CD4-positive, alpha-beta T cell (primary cell): ENCODE measurements at regions of chr17 and their contacts with region 1.

Region 1: DNA sequence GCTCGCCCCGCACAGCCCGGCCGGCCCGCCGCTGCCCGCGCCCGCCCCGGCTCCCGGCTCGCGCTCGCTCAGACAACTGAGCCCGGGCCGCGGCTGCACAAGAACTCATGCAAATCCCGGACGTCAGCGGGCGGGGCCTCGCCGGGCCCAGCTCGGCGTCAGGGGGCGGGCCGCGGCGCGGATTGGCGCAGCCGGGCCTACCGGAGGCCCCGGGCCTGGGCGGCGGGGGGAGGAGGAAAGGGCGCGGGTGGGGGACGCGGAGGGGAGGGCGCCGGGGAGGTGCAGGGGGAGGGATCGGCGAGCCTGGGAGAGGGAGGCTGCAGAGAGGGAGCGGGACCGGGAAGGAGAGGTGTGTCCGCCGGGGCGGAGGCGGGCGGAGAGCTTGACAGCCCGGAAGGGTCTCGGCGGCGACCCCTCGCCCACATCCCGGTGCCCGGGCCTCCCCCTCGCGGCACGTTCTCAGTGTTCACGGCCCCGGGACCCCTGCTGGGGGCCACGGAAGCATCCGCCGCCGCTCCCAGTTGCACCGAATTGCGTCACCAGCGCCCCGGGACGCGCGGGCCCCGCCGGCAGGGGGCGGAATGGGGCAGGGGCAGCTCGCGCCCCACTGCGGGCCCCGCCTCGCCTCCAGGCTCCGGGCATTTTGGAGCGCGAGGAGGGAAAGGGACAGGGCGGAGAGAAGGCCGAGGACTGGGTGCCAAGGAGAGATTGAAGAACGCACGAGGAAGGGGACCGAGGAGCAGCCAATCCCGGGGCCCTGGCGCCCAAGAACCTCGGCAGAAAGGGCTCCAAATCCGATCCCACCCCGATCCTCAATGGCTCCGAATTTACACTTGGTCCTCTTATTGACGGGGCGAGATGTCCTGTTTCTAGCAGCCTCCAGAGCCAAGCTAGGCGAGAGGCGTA is at the start of gene CBX4:
- DNase-seq: peak; percentile 84 to 96 (median 92)
- ATAC-seq: peak; percentile 73
- H3K4me3 ChIP-seq: peak within 1 kb of the TSS; percentile 98
- H3K4me3 Mint-ChIP-seq: peak within 1 kb of the TSS; percentile 98
- H3K27ac ChIP-seq: peak within 1 kb of the TSS; percentile 58 to 75
- H3K27ac Mint-ChIP-seq: peak within 1 kb of the TSS; percentile 99
- H3K4me1 ChIP-seq: peaks cover 86% of the 10 kb centered on the region
- H3K4me1 Mint-ChIP-seq: peaks cover 48% of the 10 kb centered on the region
- H3K27me3 ChIP-seq: peaks cover 37 to 47% of the 10 kb centered on the region in 2 experiments
- H3K27me3 Mint-ChIP-seq: peaks cover 38% of the 10 kb centered on the region
- CTCF ChIP-seq: peak; percentile 67
- total RNA-seq, gene CBX4: 196 to 202 TPM

Region 2: DNA sequence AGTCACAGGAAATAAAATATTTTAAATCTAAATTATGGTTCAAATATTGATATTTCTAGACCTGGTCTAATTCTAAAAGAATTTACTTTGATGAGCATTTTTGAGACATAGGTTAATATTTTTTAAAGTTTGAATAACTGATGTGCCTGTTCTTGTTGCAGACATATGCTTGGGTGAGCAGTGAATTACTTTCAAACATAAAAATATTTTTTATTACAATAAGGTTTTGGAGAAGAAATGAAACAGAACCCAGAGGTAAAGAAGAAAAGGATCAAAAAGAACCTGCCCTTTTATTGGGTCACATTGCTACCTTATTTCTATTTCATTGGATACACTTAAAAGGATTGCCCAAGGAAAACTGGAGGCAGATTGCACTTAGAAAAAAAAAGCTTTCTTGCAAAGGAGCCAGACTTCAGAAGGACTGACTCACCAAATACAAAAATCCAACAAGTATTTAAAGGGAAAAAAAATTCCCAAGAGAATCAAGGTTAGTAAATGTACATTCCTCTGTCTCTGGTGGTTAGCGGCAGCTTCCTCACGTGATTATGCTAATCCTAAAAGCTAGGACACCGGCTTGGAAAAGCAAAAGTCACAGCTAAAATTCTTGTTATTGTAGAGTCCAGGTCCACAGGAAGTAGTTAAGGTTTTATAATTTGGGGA is 90.3 kb before region 1 on chr17:
- CTCF ChIA-PET with region 1: interaction called, 9 read pairs
- POLR2A ChIA-PET with region 1: interaction called, 14 read pairs
- intact Hi-C with region 1: loop called (anchors 1 kb)
- DNase-seq: no peak
- ATAC-seq: no peak
- H3K4me3 ChIP-seq: no peak overlapping the region
- H3K4me3 Mint-ChIP-seq: no peak overlapping the region
- H3K27ac ChIP-seq: no peak overlapping the region
- H3K27ac Mint-ChIP-seq: no peak overlapping the region
- H3K4me1 ChIP-seq: peaks cover 28% of the 10 kb centered on the region
- H3K4me1 Mint-ChIP-seq: peaks cover 19% of the 10 kb centered on the region
- H3K27me3 ChIP-seq: peaks cover 44 to 54% of the 10 kb centered on the region in 2 experiments
- H3K27me3 Mint-ChIP-seq: peaks cover 69% of the 10 kb centered on the region
- CTCF ChIP-seq: no peak

Region 3: GRCh38 chr17:79796763-79797491 is 42.7 kb before region 1 on chr17 and contains the start of gene CBX8:
- CTCF ChIA-PET with region 1: interaction called, 6 read pairs
- POLR2A ChIA-PET with region 1: interaction called, 127 read pairs
- intact Hi-C with region 1: loop called (anchors 1 to 5 kb)
- DNase-seq: peak; percentile 97 to 100 (median 99)
- ATAC-seq: peak; percentile 80
- H3K4me3 ChIP-seq: peak within 1 kb of the TSS; percentile 69
- H3K4me3 Mint-ChIP-seq: peak within 1 kb of the TSS; percentile 93
- H3K27ac ChIP-seq: peak within 1 kb of the TSS in 1 of 2 donors; percentile 7
- H3K27ac Mint-ChIP-seq: peak within 1 kb of the TSS; percentile 80
- H3K4me1 ChIP-seq: peaks cover 62% of the 10 kb centered on the region
- H3K4me1 Mint-ChIP-seq: peaks cover 49% of the 10 kb centered on the region
- H3K27me3 ChIP-seq: peaks cover 50 to 58% of the 10 kb centered on the region in 2 experiments
- H3K27me3 Mint-ChIP-seq: peaks cover 50% of the 10 kb centered on the region
- CTCF ChIP-seq: no peak
- total RNA-seq, gene CBX8: 5.3 to 6.5 TPM

Region 4: GRCh38 chr17:79818026-79818758 is 21.4 kb before region 1 on chr17:
- CTCF ChIA-PET with region 1: interaction called, 15 read pairs
- POLR2A ChIA-PET with region 1: interaction called, 82 read pairs
- intact Hi-C with region 1: no loop called
- DNase-seq: no peak
- ATAC-seq: no peak
- H3K4me3 ChIP-seq: no peak overlapping the region
- H3K4me3 Mint-ChIP-seq: no peak overlapping the region
- H3K27ac ChIP-seq: no peak overlapping the region
- H3K27ac Mint-ChIP-seq: no peak overlapping the region
- H3K4me1 ChIP-seq: peaks cover 23% of the 10 kb centered on the region
- H3K4me1 Mint-ChIP-seq: peaks cover 7% of the 10 kb centered on the region
- H3K27me3 ChIP-seq: peaks cover 24 to 32% of the 10 kb centered on the region in 2 experiments
- H3K27me3 Mint-ChIP-seq: peaks cover 33% of the 10 kb centered on the region
- CTCF ChIP-seq: no peak

Region 5: GRCh38 chr17:79991140-79991923 is 151.7 kb after region 1 on chr17:
- CTCF ChIA-PET with region 1: interaction called, 3 read pairs
- POLR2A ChIA-PET with region 1: interaction called, 12 read pairs
- intact Hi-C with region 1: loop called (anchors 1 to 2 kb)
- DNase-seq: peak; percentile 76 to 92 (median 84)
- ATAC-seq: peak; percentile 95
- H3K4me3 ChIP-seq: peak overlapping the region; percentile 76
- H3K4me3 Mint-ChIP-seq: peak overlapping the region; percentile 82
- H3K27ac ChIP-seq: no peak overlapping the region
- H3K27ac Mint-ChIP-seq: peak overlapping the region; percentile 66
- H3K4me1 ChIP-seq: peaks cover 41% of the 10 kb centered on the region
- H3K4me1 Mint-ChIP-seq: peaks cover 46% of the 10 kb centered on the region
- H3K27me3 ChIP-seq: no peaks in the 10 kb centered on the region
- H3K27me3 Mint-ChIP-seq: no peaks in the 10 kb centered on the region
- CTCF ChIP-seq: peak; percentile 60

Region 6: GRCh38 chr17:80035943-80036714 is 196.5 kb after region 1 on chr17 and contains the start of gene CCDC40:
- CTCF ChIA-PET with region 1: no interaction called
- POLR2A ChIA-PET with region 1: no interaction called
- intact Hi-C with region 1: loop called in 1 of 2 experiments (anchors 2 kb)
- DNase-seq: peak; percentile 50 to 95 (median 70)
- ATAC-seq: peak; percentile 84
- H3K4me3 ChIP-seq: peak within 1 kb of the TSS; percentile 65
- H3K4me3 Mint-ChIP-seq: peak within 1 kb of the TSS; percentile 95
- H3K27ac ChIP-seq: peak within 1 kb of the TSS in 1 of 2 donors; percentile 40
- H3K27ac Mint-ChIP-seq: peak within 1 kb of the TSS; percentile 81
- H3K4me1 ChIP-seq: peaks cover 23% of the 10 kb centered on the region
- H3K4me1 Mint-ChIP-seq: peaks cover 18% of the 10 kb centered on the region
- H3K27me3 ChIP-seq: peaks cover 0 to 13% of the 10 kb centered on the region in 2 experiments
- H3K27me3 Mint-ChIP-seq: peaks cover 4% of the 10 kb centered on the region
- CTCF ChIP-seq: no peak
- total RNA-seq, gene CCDC40: 0.64 to 0.77 TPM